GM12878 (cell line): ENCODE measurements at regions of chr6 and their contacts with region 1.

Region 1: GRCh38 chr6:12289933-12290820 is at the start of gene EDN1:
- DNase-seq: peak; percentile 51
- ATAC-seq: peak; percentile 84
- H3K4me3 ChIP-seq: peak within 1 kb of the TSS; percentile 88
- H3K27ac ChIP-seq: peak within 1 kb of the TSS; percentile 54
- H3K4me1 ChIP-seq: peaks cover 8% of the 10 kb centered on the region
- H3K27me3 ChIP-seq: no peaks in the 10 kb centered on the region
- CTCF ChIP-seq: peak; percentile 51 to 66 (median 55)
- EP300 ChIP-seq: no peak; a peak in 1 of 4 replicates
- POLR2A ChIP-seq: peak; percentile 57; the same call in 1 of the 2 replicates
- RAD21 ChIP-seq: peak; percentile 50
- polyA plus RNA-seq, gene EDN1: 2.0 to 2.5 TPM

Region 2: GRCh38 chr6:11563793-11564192 is 726.4 kb before region 1 on chr6:
- CTCF ChIA-PET with region 1: no interaction called
- POLR2A ChIA-PET with region 1: no interaction called
- RAD21 ChIA-PET with region 1: no interaction called
- SMC1A ChIA-PET with region 1: no interaction called
- in situ Hi-C with region 1: no loop called
- intact Hi-C with region 1: no loop called
- DNase-seq: no peak
- ATAC-seq: no peak
- H3K4me3 ChIP-seq: no peak overlapping the region
- H3K27ac ChIP-seq: no peak overlapping the region
- H3K4me1 ChIP-seq: no peaks in the 10 kb centered on the region
- H3K27me3 ChIP-seq: no peaks in the 10 kb centered on the region
- CTCF ChIP-seq: no peak
- EP300 ChIP-seq: no peak
- POLR2A ChIP-seq: no peak
- RAD21 ChIP-seq: no peak

Region 3: GRCh38 chr6:11585426-11586016 is 704.7 kb before region 1 on chr6:
- CTCF ChIA-PET with region 1: interaction called, 26 read pairs
- POLR2A ChIA-PET with region 1: no interaction called
- RAD21 ChIA-PET with region 1: interaction called, 16 read pairs
- SMC1A ChIA-PET with region 1: interaction called, 13 read pairs
- in situ Hi-C with region 1: no loop called
- intact Hi-C with region 1: loop called (anchors 1 kb)
- DNase-seq: peak; percentile 32
- ATAC-seq: peak; percentile 70
- H3K4me3 ChIP-seq: no peak overlapping the region
- H3K27ac ChIP-seq: no peak overlapping the region
- H3K4me1 ChIP-seq: no peaks in the 10 kb centered on the region
- H3K27me3 ChIP-seq: no peaks in the 10 kb centered on the region
- CTCF ChIP-seq: peak; percentile 45 to 67 (median 59); a peak in 5 of 6 replicates
- EP300 ChIP-seq: no peak
- POLR2A ChIP-seq: no peak
- RAD21 ChIP-seq: peak; percentile 77

Region 4: DNA sequence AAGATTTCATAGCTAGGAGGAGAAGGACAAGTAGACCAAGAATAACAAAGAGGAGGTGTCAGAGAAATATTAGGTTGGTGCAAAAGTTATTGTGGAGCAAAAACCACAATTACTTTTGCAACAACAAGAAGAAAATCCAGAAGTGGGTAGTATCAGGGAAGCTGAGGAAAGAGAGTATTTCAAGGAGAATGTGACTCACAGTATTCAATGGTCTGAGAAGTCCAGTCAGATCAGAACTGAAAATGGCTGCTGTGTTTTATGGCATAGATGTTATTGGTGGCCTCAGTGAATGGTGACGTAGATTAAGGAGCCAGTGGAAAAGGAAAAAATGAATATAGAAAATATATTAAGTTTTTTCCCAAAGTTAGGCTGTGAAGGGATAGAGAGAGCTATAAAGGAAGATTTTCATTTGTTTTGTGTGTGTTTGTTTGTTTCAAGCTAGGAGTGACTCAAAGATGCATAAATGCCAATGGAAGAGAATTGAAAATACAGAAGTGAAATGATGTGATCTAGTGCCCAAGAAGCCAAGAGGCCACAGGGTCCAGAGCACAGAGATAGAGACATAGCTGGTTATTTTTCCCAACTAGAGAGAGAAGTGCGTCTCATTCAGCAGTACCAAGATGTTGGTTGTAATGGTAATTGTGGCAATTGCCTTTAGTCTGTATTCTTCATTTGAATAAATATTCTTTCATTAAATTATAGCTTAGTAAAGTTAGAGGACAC is 624.4 kb before region 1 on chr6:
- CTCF ChIA-PET with region 1: interaction called, 205 read pairs
- POLR2A ChIA-PET with region 1: interaction called, 4 read pairs
- RAD21 ChIA-PET with region 1: interaction called, 29 read pairs
- SMC1A ChIA-PET with region 1: interaction called, 6 read pairs
- in situ Hi-C with region 1: no loop called
- intact Hi-C with region 1: no loop called
- DNase-seq: no peak
- ATAC-seq: peak; percentile 74
- H3K4me3 ChIP-seq: no peak overlapping the region
- H3K27ac ChIP-seq: no peak overlapping the region
- H3K4me1 ChIP-seq: no peaks in the 10 kb centered on the region
- H3K27me3 ChIP-seq: no peaks in the 10 kb centered on the region
- CTCF ChIP-seq: no peak
- EP300 ChIP-seq: no peak
- POLR2A ChIP-seq: no peak
- RAD21 ChIP-seq: no peak

Region 5: GRCh38 chr6:12011276-12012076 is 278.7 kb before region 1 on chr6:
- CTCF ChIA-PET with region 1: interaction called, 3 read pairs
- POLR2A ChIA-PET with region 1: no interaction called
- RAD21 ChIA-PET with region 1: interaction called, 9 read pairs
- SMC1A ChIA-PET with region 1: interaction called, 8 read pairs
- in situ Hi-C with region 1: no loop called
- intact Hi-C with region 1: loop called (anchors 5 kb)
- DNase-seq: peak; percentile 81
- ATAC-seq: peak; percentile 74
- H3K4me3 ChIP-seq: no peak overlapping the region
- H3K27ac ChIP-seq: peak overlapping the region; percentile 97; the same call in 1 of the 2 replicates
- H3K4me1 ChIP-seq: peaks cover 8% of the 10 kb centered on the region
- H3K27me3 ChIP-seq: no peaks in the 10 kb centered on the region
- CTCF ChIP-seq: no peak
- EP300 ChIP-seq: peak in 1 of 2 experiments; percentile 47; a peak in 1 of 4 replicates
- POLR2A ChIP-seq: peak; percentile 77
- RAD21 ChIP-seq: no peak

Region 6: DNA sequence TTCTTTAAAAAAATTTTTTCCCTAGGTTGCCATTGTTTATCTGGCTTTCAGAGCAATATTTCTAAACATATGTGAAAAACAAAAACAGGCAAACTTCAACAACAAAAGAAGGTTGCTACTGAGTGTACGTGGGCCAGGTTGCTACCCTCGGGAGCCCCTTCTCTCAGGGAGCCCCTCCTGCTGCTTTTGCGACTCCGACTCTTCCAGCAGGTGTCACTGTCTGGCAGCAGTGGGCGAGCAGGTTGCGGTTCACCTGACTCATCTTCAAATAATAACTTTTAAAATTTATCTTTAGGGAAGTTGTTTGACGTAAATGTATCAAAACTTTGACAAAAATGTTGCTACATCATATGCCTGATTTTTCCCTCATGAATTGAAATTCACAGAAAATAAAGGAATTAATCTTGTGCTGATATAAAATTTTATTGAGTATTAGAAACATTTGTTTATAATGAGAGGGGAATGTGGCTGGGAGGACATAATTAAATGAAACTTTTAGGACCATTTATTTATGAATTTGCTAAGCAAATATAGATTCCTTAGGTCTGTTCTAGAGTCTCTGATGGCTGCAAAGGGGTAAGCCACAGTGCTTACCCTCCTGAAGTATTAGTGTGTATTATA is 139.3 kb before region 1 on chr6:
- CTCF ChIA-PET with region 1: interaction called, 3 read pairs
- POLR2A ChIA-PET with region 1: no interaction called
- RAD21 ChIA-PET with region 1: no interaction called
- SMC1A ChIA-PET with region 1: interaction called, 3 read pairs
- in situ Hi-C with region 1: no loop called
- intact Hi-C with region 1: loop called (anchors 2 kb)
- DNase-seq: no peak
- ATAC-seq: peak; percentile 46; the same call in 2 of the 3 replicates
- H3K4me3 ChIP-seq: no peak overlapping the region
- H3K27ac ChIP-seq: no peak overlapping the region
- H3K4me1 ChIP-seq: no peaks in the 10 kb centered on the region
- H3K27me3 ChIP-seq: no peaks in the 10 kb centered on the region
- CTCF ChIP-seq: peak; percentile 28 to 40 (median 32)
- EP300 ChIP-seq: no peak
- POLR2A ChIP-seq: no peak
- RAD21 ChIP-seq: peak; percentile 63

Region 7: DNA sequence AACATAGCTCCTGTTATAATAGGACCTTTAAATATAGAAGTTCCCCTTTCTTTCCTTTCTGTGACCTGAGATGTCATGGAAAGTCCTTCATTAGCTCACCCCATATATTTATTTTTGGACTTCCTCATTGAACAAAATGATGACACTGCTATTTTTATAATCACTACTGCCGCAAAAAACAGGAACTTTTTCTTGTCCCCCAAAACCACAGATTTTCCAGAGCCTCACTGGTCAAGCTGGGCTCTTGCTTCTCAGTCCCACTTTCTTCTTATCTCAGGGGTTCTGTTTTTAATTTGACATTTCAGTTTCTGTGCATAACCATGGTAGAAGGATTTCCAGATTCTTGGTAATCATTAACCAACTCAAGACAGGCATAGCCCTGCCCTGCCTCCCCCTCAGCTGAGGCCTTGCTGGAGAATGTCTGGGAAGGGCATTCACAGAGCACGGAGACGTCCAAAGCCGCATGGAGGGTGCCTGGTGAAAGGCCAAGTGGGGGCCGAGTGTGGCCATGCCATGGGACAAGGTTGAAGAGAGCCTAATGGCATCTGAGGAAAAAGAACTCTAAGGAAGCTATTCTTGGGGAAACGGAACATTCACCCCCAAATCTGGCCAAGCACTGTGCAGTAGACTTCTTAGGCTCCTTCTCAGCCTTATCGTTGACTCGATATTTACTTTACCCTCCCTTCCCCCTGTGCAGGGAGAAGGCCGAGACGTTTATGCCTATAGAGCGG is 73.6 kb after region 1 on chr6:
- CTCF ChIA-PET with region 1: interaction called, 122 read pairs
- POLR2A ChIA-PET with region 1: interaction called, 26 read pairs
- RAD21 ChIA-PET with region 1: interaction called, 206 read pairs
- SMC1A ChIA-PET with region 1: interaction called, 189 read pairs
- in situ Hi-C with region 1: no loop called
- intact Hi-C with region 1: loop called (anchors 2 kb)
- DNase-seq: peak; percentile 95
- ATAC-seq: peak; percentile 88
- H3K4me3 ChIP-seq: no peak overlapping the region
- H3K27ac ChIP-seq: peak overlapping the region; percentile 70
- H3K4me1 ChIP-seq: peaks cover 38% of the 10 kb centered on the region
- H3K27me3 ChIP-seq: no peaks in the 10 kb centered on the region
- CTCF ChIP-seq: no peak
- EP300 ChIP-seq: peak; percentile 84 to 93
- POLR2A ChIP-seq: no peak
- RAD21 ChIP-seq: 0 out of 2 replicates have a peak, but pooled peaks have one; percentile 6

Region 8: DNA sequence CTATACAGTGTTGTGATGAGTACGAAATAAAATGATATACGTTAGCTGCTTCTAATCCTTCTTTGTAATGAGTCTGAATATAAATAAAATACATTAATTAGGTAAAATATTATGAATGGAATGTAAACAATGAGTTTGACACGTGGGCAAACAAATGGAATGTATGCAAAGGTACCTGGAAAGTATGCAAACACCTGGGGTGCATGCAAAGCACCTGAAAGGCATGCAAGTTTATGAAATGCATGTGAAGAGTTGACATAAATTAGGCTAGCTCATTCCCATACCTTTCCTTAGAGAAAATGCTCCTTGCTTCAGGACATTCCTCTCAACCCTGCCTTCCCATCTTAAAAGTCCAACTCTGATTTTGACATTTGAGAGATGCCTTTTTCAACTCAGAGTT is 140.8 kb after region 1 on chr6:
- CTCF ChIA-PET with region 1: no interaction called
- POLR2A ChIA-PET with region 1: no interaction called
- RAD21 ChIA-PET with region 1: no interaction called
- SMC1A ChIA-PET with region 1: no interaction called
- in situ Hi-C with region 1: no loop called
- intact Hi-C with region 1: no loop called
- DNase-seq: no peak
- ATAC-seq: no peak
- H3K4me3 ChIP-seq: no peak overlapping the region
- H3K27ac ChIP-seq: no peak overlapping the region
- H3K4me1 ChIP-seq: no peaks in the 10 kb centered on the region
- H3K27me3 ChIP-seq: no peaks in the 10 kb centered on the region
- CTCF ChIP-seq: no peak
- EP300 ChIP-seq: no peak
- POLR2A ChIP-seq: no peak
- RAD21 ChIP-seq: no peak

Region 9: GRCh38 chr6:12595161-12595811 is 305.1 kb after region 1 on chr6:
- CTCF ChIA-PET with region 1: interaction called, 49 read pairs
- POLR2A ChIA-PET with region 1: interaction called, 5 read pairs
- RAD21 ChIA-PET with region 1: interaction called, 384 read pairs
- SMC1A ChIA-PET with region 1: interaction called, 382 read pairs
- in situ Hi-C with region 1: loop called (anchors 5 kb)
- intact Hi-C with region 1: no loop called
- DNase-seq: no peak
- ATAC-seq: peak; percentile 75
- H3K4me3 ChIP-seq: no peak overlapping the region
- H3K27ac ChIP-seq: no peak overlapping the region
- H3K4me1 ChIP-seq: peaks cover 14% of the 10 kb centered on the region
- H3K27me3 ChIP-seq: no peaks in the 10 kb centered on the region
- CTCF ChIP-seq: no peak
- EP300 ChIP-seq: no peak; a peak in 2 of 4 replicates
- POLR2A ChIP-seq: no peak
- RAD21 ChIP-seq: no peak